ENCODE measurements at regions of chr2 and their contacts with region 1.

Region 1: DNA sequence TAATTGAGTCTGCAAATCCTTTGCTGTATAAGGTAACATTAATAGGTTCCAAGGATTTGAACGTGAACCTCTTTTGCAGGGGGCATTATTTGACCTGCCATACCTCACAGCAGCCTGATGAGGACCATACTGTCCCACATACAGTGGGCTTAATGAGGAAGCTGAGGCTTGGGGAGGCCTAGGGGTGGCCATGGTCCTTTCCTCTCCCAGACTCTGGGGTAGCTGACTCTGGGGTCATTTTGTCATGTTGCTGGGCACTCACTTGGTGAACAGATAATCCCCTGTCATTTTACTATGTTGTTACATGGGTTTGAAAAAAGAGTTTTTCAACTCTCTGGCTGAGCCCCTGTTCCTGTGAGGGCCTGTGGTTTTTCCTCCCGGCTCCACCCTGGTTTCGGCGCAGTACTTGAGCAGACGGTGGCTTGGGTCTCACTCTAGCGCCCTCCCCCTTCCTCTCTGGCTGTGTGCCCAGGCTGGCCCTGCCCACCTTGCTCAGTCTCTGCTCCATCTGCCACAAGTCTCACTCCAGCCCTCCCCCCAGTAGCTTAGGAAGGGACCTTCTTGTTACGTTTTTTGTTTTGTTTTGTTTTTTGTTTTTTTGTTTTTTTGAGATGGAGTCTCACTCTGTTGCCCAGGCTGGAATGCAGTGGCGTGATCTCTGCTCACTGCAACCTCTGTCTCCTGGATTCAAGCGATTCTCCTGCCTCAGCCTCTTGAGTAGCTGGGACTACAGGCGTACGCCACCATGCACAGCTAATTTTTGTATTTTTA is 21.0 kb downstream of the INPP4A start:
- DNase-seq: peak; percentile 90
- H3K4me3 Mint-ChIP-seq: peak overlapping the region; percentile 73
- H3K27ac Mint-ChIP-seq: peak overlapping the region; percentile 97
- H3K4me1 Mint-ChIP-seq: peaks cover 91% of the 10 kb centered on the region
- H3K27me3 Mint-ChIP-seq: no peaks in the 10 kb centered on the region

Region 2: GRCh38 chr2:98359986-98360385 is 105.7 kb before region 1 on chr2:
- CTCF ChIA-PET with region 1: no interaction called
- POLR2A ChIA-PET with region 1: no interaction called
- DNase-seq: no peak
- H3K4me3 Mint-ChIP-seq: no peak overlapping the region
- H3K27ac Mint-ChIP-seq: no peak overlapping the region
- H3K4me1 Mint-ChIP-seq: no peaks in the 10 kb centered on the region
- H3K27me3 Mint-ChIP-seq: peaks cover 20% of the 10 kb centered on the region

Region 3: DNA sequence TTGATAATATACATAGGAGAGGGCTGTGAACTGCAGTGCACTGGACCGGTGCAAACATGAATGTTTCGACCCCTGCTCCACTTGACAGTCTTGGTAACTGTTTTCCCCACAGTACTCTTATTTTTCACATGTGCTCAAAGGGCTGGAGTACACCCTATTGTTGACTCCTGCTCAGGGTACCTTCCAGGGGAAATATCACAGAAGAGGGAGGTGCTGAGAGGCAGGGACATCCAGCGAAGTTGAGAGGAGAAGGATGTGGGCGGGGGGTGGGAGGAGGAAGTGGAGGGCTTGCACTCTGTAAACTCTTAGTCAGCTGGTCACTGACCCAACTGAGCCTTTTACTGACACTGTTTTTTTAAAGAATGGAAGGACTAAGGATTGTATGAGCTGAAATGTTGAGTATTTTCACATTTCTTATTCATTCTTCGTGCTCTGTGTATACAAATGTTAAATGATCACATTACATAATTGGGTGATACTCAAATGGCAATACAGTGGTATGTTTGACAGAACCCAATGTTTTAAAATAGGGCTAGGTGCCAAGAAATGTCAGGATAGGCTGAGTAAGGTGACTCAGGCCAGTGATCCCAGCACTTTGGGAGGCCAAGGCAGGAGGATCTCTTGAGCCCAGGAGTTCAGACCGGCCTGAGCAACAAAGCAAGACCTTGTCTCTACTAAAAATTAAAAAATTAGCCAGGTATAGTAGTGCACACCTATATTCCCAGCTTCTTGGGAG is 11.0 kb before region 1 on chr2:
- CTCF ChIA-PET with region 1: interaction called, 46 read pairs
- POLR2A ChIA-PET with region 1: no interaction called
- DNase-seq: peak; percentile 54
- H3K4me3 Mint-ChIP-seq: peak overlapping the region; percentile 49
- H3K27ac Mint-ChIP-seq: peak overlapping the region; percentile 88
- H3K4me1 Mint-ChIP-seq: peaks cover 94% of the 10 kb centered on the region
- H3K27me3 Mint-ChIP-seq: no peaks in the 10 kb centered on the region

Region 4: GRCh38 chr2:98479959-98480524 is 14.4 kb after region 1 on chr2:
- CTCF ChIA-PET with region 1: interaction called, 60 read pairs
- POLR2A ChIA-PET with region 1: interaction called, 4 read pairs
- DNase-seq: peak; percentile 54
- H3K4me3 Mint-ChIP-seq: peak overlapping the region; percentile 44
- H3K27ac Mint-ChIP-seq: peak overlapping the region; percentile 92
- H3K4me1 Mint-ChIP-seq: peaks cover 99% of the 10 kb centered on the region
- H3K27me3 Mint-ChIP-seq: no peaks in the 10 kb centered on the region

Region 5: DNA sequence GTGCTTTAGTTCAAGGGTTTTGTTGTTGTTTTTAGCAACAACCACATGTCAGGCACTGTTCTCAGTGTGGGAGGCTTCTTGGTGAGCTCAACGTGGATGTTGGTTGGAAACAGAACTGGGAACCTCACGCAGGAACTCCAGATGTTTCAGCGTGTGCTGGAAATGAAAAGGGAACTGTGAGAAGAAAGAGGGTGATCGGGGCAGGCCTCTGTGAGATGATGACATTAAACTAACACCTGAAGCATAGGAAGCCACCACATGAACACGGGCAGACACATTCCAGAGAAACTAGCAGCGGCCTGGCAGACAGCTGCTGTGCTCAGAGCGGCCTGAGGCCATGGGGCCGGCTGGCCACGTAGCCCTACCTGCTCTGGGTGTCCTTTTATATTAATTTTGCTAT is 76.3 kb after region 1 on chr2:
- CTCF ChIA-PET with region 1: no interaction called
- POLR2A ChIA-PET with region 1: no interaction called
- DNase-seq: no peak
- H3K4me3 Mint-ChIP-seq: no peak overlapping the region
- H3K27ac Mint-ChIP-seq: peak overlapping the region; percentile 41
- H3K4me1 Mint-ChIP-seq: peaks cover 19% of the 10 kb centered on the region
- H3K27me3 Mint-ChIP-seq: no peaks in the 10 kb centered on the region

Measured in activated CD4-positive, alpha-beta T cell treated with anti-CD3 and anti-CD28 coated beads, Interleukin-2, amount 10 ng/mL, durations not matched to agents 7 days and 5 days (primary cell).